Caco-2 (cell line): ENCODE measurements at regions of chr10 and their contacts with region 1.

Region 1: GRCh38 chr10:46035923-46036849 is 5.8 kb upstream of the NCOA4 start:
- DNase-seq: peak in 1 of 2 experiments; percentile 54
- H3K4me3 ChIP-seq: no peak overlapping the region
- H3K4me3 Mint-ChIP-seq: no peak overlapping the region
- H3K27ac Mint-ChIP-seq: no peak overlapping the region
- H3K4me1 ChIP-seq: peaks cover 41% of the 10 kb centered on the region
- H3K4me1 Mint-ChIP-seq: peaks cover 20% of the 10 kb centered on the region
- H3K27me3 ChIP-seq: no peaks in the 10 kb centered on the region
- H3K27me3 Mint-ChIP-seq: no peaks in the 10 kb centered on the region
- CTCF ChIP-seq: peak; percentile 14 to 47

Region 2: DNA sequence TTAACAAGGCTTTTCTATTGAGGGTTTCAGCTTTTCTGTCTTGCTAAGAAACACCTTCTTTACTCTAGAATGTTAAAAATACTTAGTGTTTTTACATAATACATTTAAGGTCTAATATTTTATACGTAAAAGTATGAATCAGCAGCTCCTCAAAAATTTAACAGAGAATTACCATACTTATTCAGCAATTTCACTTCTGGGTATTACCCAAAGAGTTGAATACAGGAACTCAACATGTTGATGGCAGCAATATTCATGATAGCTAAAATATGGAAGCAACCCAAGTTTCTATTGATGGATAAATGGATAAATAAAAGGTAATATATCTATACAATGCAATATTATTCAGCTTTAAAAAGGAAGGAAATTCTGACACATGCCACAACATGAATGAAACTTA is 711.1 kb before region 1 on chr10:
- CTCF ChIA-PET with region 1: no interaction called
- POLR2A ChIA-PET with region 1: no interaction called
- intact Hi-C with region 1: no loop called
- DNase-seq: no peak
- H3K4me3 ChIP-seq: no peak overlapping the region
- H3K4me3 Mint-ChIP-seq: no peak overlapping the region
- H3K27ac Mint-ChIP-seq: no peak overlapping the region
- H3K4me1 ChIP-seq: no peaks in the 10 kb centered on the region
- H3K4me1 Mint-ChIP-seq: no peaks in the 10 kb centered on the region
- H3K27me3 ChIP-seq: no peaks in the 10 kb centered on the region
- H3K27me3 Mint-ChIP-seq: peaks cover 3% of the 10 kb centered on the region
- CTCF ChIP-seq: no peak

Region 3: DNA sequence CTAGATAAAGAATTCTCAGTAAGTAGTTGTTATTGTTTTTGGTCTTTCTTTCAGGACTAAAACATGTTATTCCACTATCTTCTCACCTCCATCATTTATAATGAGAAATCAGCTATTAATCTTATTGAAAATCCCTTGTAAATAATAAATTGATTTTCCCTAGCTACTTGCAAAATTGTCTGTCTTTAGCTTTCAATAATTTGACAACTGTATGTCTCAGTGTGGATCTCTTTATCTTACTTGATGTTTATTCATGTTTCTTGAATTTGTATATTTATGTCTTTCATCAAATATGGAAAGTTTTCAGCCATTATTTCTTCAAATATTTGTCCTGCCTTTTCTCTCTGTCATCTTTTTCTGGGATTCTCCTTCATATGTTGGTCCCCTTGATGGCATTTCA is 133.6 kb after region 1 on chr10:
- CTCF ChIA-PET with region 1: no interaction called
- POLR2A ChIA-PET with region 1: no interaction called
- intact Hi-C with region 1: loop called (anchors 5 kb)
- DNase-seq: no peak
- H3K4me3 ChIP-seq: no peak overlapping the region
- H3K4me3 Mint-ChIP-seq: no peak overlapping the region
- H3K27ac Mint-ChIP-seq: no peak overlapping the region
- H3K4me1 ChIP-seq: no peaks in the 10 kb centered on the region
- H3K4me1 Mint-ChIP-seq: no peaks in the 10 kb centered on the region
- H3K27me3 ChIP-seq: no peaks in the 10 kb centered on the region
- H3K27me3 Mint-ChIP-seq: peaks cover 17% of the 10 kb centered on the region
- CTCF ChIP-seq: no peak